Breast epithelium (tissue), 4 donors: ENCODE measurements at regions of chr1 and their contacts with region 1.

Region 1: DNA sequence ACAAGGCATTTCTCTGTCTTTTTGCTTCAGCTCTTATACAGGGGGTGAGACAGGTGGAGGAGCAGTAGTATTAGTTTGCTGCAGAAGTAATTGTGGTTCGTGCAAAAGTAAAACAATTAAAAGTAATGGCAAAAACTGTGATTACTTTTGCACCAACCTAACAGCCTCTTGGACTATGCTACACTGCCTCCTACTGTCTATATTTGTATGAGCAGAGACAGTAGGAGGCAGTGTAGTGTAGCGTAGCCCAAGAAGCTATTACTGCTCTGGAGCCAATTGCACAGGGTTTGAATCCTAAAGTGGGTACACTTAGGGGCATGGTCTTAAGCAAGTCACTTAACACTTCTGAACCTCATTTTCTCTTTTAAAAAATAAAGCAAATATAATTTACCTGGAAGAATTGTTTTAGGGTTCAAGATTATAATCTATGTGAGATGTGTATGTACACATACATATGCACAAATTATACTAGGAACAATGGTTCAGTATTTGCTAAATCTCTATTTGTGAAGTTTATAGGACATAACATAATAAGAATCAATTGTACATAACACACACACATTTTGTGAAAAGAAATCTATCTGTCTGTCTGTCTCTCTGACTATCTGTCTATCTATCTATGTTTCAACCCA is 103.8 kb downstream of the BRINP3 start:
- DNase-seq: no peak
- H3K4me3 ChIP-seq: no peak overlapping the region
- H3K27ac ChIP-seq: no peak overlapping the region
- H3K4me1 ChIP-seq: no peaks in the 10 kb centered on the region
- H3K27me3 ChIP-seq: no peaks in the 10 kb centered on the region
- CTCF ChIP-seq: no peak
- POLR2A ChIP-seq: no peak

Region 2: GRCh38 chr1:189847613-189848012 is 526.2 kb before region 1 on chr1:
- intact Hi-C with region 1: no loop called
- DNase-seq: no peak
- H3K4me3 ChIP-seq: no peak overlapping the region
- H3K27ac ChIP-seq: no peak overlapping the region
- H3K4me1 ChIP-seq: no peaks in the 10 kb centered on the region
- H3K27me3 ChIP-seq: no peaks in the 10 kb centered on the region
- CTCF ChIP-seq: no peak
- POLR2A ChIP-seq: no peak

Region 3: GRCh38 chr1:190429141-190429540 is 55.3 kb after region 1 on chr1:
- intact Hi-C with region 1: no loop called
- DNase-seq: no peak
- H3K4me3 ChIP-seq: no peak overlapping the region
- H3K27ac ChIP-seq: no peak overlapping the region
- H3K4me1 ChIP-seq: no peaks in the 10 kb centered on the region
- H3K27me3 ChIP-seq: no peaks in the 10 kb centered on the region
- CTCF ChIP-seq: no peak
- POLR2A ChIP-seq: no peak

Region 4: GRCh38 chr1:190453550-190453949 is 79.7 kb after region 1 on chr1:
- intact Hi-C with region 1: loop called (anchors 5 kb)
- DNase-seq: no peak
- H3K4me3 ChIP-seq: no peak overlapping the region
- H3K27ac ChIP-seq: no peak overlapping the region
- H3K4me1 ChIP-seq: no peaks in the 10 kb centered on the region
- H3K27me3 ChIP-seq: peaks cover 0 to 3% of the 10 kb centered on the region in 2 donors
- CTCF ChIP-seq: no peak
- POLR2A ChIP-seq: no peak